PC-3 (cell line): ENCODE measurements at regions of chrX and their contacts with region 1.

Region 1: GRCh38 chrX:87299563-87300160 is 217.9 kb upstream of the KLHL4 start:
- DNase-seq: peak; percentile 49
- ATAC-seq: no peak
- H3K4me3 ChIP-seq: no peak overlapping the region
- H3K27ac ChIP-seq: no peak overlapping the region
- H3K4me1 ChIP-seq: no peaks in the 10 kb centered on the region
- H3K27me3 ChIP-seq: no peaks in the 10 kb centered on the region
- CTCF ChIP-seq: peak; percentile 57

Region 2: GRCh38 chrX:86133761-86134160 is 1165.9 kb before region 1 on chrX:
- CTCF ChIA-PET with region 1: no interaction called
- POLR2A ChIA-PET with region 1: no interaction called
- intact Hi-C with region 1: loop called (anchors 10 kb)
- DNase-seq: no peak
- ATAC-seq: no peak
- H3K4me3 ChIP-seq: no peak overlapping the region
- H3K27ac ChIP-seq: no peak overlapping the region
- H3K4me1 ChIP-seq: no peaks in the 10 kb centered on the region
- H3K27me3 ChIP-seq: no peaks in the 10 kb centered on the region
- CTCF ChIP-seq: peak; percentile 58

Region 3: GRCh38 chrX:86348669-86349068 is 951.0 kb before region 1 on chrX:
- CTCF ChIA-PET with region 1: no interaction called
- POLR2A ChIA-PET with region 1: no interaction called
- intact Hi-C with region 1: no loop called
- DNase-seq: no peak
- ATAC-seq: no peak
- H3K4me3 ChIP-seq: no peak overlapping the region
- H3K27ac ChIP-seq: no peak overlapping the region
- H3K4me1 ChIP-seq: no peaks in the 10 kb centered on the region
- H3K27me3 ChIP-seq: no peaks in the 10 kb centered on the region
- CTCF ChIP-seq: 0 out of 2 replicates have a peak, but pooled peaks have one; percentile 15

Region 4: DNA sequence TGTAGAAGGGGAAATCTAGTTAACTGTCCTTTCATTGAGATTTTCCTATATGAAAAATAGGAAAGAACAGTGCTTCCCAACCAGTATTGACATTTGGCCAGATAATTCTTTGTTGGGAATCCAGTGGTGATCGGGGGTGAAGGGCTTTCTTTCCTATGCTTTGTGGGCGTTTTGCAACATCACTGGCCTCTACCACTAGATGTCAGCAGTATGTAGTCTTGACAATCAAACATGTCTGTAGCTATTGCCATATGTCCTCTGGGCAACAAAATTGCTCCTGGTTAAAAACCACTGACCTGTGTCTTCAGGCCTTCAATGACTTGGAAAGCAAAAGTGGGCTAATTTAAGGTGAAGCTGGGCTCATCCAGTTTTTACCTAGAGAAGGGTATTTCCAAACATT is 492.9 kb before region 1 on chrX:
- CTCF ChIA-PET with region 1: no interaction called
- POLR2A ChIA-PET with region 1: no interaction called
- intact Hi-C with region 1: loop called (anchors 10 kb)
- DNase-seq: peak; percentile 24
- ATAC-seq: no peak
- H3K4me3 ChIP-seq: no peak overlapping the region
- H3K27ac ChIP-seq: no peak overlapping the region
- H3K4me1 ChIP-seq: no peaks in the 10 kb centered on the region
- H3K27me3 ChIP-seq: no peaks in the 10 kb centered on the region
- CTCF ChIP-seq: peak; percentile 47

Region 5: DNA sequence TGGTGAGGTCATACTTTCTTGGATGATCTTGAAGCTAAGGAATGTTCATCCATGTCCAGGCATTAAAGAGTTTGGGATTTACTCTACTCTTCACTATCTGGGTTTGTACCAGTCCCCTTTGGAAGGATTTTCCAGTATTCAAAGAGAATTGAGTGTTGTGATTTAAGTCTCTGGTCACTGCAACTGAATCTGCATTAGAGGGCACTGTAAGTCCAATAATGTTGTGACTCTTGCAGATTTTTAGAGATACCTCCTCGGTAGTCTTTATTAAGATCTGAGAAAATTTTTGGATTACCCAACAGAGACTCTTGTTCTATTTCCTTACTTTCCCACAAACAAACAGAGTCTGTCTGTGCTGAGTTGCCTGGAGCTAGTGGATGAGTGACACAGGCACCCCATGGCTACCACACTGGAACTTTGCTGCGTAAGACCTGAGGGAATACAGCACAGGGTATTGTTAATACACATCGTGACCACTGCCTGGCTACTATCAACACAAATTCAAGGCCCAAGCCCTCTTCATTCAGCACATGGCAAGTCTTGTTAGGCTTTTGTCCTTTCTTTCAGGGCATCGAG is 139.1 kb before region 1 on chrX:
- CTCF ChIA-PET with region 1: no interaction called
- POLR2A ChIA-PET with region 1: no interaction called
- intact Hi-C with region 1: loop called (anchors 1 kb)
- DNase-seq: no peak
- ATAC-seq: no peak
- H3K4me3 ChIP-seq: no peak overlapping the region
- H3K27ac ChIP-seq: no peak overlapping the region
- H3K4me1 ChIP-seq: no peaks in the 10 kb centered on the region
- H3K27me3 ChIP-seq: no peaks in the 10 kb centered on the region
- CTCF ChIP-seq: no peak

Region 6: GRCh38 chrX:87562524-87562923 is 262.9 kb after region 1 on chrX:
- CTCF ChIA-PET with region 1: no interaction called
- POLR2A ChIA-PET with region 1: no interaction called
- intact Hi-C with region 1: no loop called
- DNase-seq: peak; percentile 1
- ATAC-seq: peak; percentile 43; the same call in 1 of the 2 replicates
- H3K4me3 ChIP-seq: no peak overlapping the region
- H3K27ac ChIP-seq: no peak overlapping the region
- H3K4me1 ChIP-seq: no peaks in the 10 kb centered on the region
- H3K27me3 ChIP-seq: no peaks in the 10 kb centered on the region
- CTCF ChIP-seq: no peak